Activated CD4-positive, alpha-beta T cell treated with anti-CD3 and anti-CD28 coated beads for 36 hours (primary cell): ENCODE measurements at regions of chr15 and their contacts with region 1.

Region 1: GRCh38 chr15:84600851-84601838 is at the start of gene ZSCAN2:
- DNase-seq: peak; percentile 97
- ATAC-seq: peak; percentile 96
- H3K4me3 Mint-ChIP-seq: peak within 1 kb of the TSS; percentile 82
- H3K27ac Mint-ChIP-seq: peak within 1 kb of the TSS; percentile 58
- H3K4me1 Mint-ChIP-seq: peaks cover 65% of the 10 kb centered on the region
- H3K27me3 Mint-ChIP-seq: no peaks in the 10 kb centered on the region
- total RNA-seq, gene ZSCAN2: 5.1 to 5.4 TPM

Region 2: GRCh38 chr15:84570164-84570735 is 30.9 kb before region 1 on chr15:
- CTCF ChIA-PET with region 1: interaction called, 9 read pairs
- POLR2A ChIA-PET with region 1: no interaction called
- intact Hi-C with region 1: loop called in 1 of 2 experiments (anchors 2 kb)
- DNase-seq: peak; percentile 69
- ATAC-seq: peak; percentile 43
- H3K4me3 Mint-ChIP-seq: peak overlapping the region; percentile 73
- H3K27ac Mint-ChIP-seq: peak overlapping the region; percentile 77
- H3K4me1 Mint-ChIP-seq: peaks cover 20% of the 10 kb centered on the region
- H3K27me3 Mint-ChIP-seq: peaks cover 2% of the 10 kb centered on the region

Region 3: DNA sequence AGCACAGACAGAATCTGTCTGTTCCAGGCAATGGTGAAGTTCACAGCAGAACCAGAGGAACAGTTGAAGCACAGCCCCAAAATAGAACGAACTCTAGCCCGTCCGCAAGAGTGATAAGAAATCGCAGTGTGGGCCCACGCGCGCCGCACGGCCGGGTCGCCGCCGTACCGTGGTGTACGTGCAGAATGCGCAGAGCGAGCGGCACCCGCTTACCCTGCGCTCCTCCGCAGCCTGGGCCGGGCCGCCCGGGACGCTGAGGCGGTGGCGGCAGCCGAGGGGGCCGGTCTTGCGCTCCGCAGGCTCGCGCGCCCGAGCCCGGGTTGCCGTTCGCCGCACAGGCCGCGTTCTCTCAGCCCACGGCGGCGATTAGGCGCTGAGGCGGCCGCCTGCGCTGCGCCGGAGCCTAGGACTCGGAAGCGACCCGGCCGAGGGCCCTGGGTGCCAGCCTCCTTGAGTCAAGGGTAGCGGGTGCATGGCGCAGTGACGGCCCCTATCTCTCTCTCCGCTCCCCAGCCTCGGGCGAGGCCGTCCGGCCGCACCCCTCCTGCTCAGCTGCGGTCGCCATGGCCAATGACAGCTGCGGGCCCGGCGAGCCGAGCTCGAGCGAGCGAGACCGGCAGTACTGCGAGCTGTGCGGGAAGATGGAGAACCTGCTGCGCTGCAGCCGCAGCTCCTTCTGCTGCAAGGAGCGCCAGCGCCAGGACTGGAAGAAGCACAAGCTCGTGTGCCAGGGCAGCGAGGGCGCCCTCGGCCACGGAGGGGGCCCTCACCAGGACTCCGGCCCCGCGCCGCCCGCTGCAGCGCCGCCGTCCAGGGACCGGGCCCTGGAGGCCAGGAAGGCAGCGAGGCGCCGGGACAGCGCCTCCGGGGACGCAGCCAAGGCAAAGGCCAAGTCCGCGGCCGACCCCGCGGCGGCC is 32.4 kb after region 1 on chr15:
- CTCF ChIA-PET with region 1: interaction called, 11 read pairs
- POLR2A ChIA-PET with region 1: interaction called, 5 read pairs
- intact Hi-C with region 1: loop called (anchors 1 kb)
- DNase-seq: peak; percentile 87
- ATAC-seq: peak; percentile 57
- H3K4me3 Mint-ChIP-seq: peak overlapping the region; percentile 93
- H3K27ac Mint-ChIP-seq: peak overlapping the region; percentile 99
- H3K4me1 Mint-ChIP-seq: peaks cover 45% of the 10 kb centered on the region
- H3K27me3 Mint-ChIP-seq: no peaks in the 10 kb centered on the region

Region 4: GRCh38 chr15:84748274-84749110 is 147.3 kb after region 1 on chr15 and contains the start of gene ZNF592:
- CTCF ChIA-PET with region 1: interaction called, 4 read pairs
- POLR2A ChIA-PET with region 1: no interaction called
- intact Hi-C with region 1: loop called (anchors 2 to 5 kb)
- DNase-seq: peak; percentile 86
- ATAC-seq: peak; percentile 55
- H3K4me3 Mint-ChIP-seq: peak within 1 kb of the TSS; percentile 94
- H3K27ac Mint-ChIP-seq: peak within 1 kb of the TSS; percentile 97
- H3K4me1 Mint-ChIP-seq: peaks cover 59% of the 10 kb centered on the region
- H3K27me3 Mint-ChIP-seq: no peaks in the 10 kb centered on the region
- total RNA-seq, gene ZNF592: 25.5 to 30.8 TPM

Region 5: DNA sequence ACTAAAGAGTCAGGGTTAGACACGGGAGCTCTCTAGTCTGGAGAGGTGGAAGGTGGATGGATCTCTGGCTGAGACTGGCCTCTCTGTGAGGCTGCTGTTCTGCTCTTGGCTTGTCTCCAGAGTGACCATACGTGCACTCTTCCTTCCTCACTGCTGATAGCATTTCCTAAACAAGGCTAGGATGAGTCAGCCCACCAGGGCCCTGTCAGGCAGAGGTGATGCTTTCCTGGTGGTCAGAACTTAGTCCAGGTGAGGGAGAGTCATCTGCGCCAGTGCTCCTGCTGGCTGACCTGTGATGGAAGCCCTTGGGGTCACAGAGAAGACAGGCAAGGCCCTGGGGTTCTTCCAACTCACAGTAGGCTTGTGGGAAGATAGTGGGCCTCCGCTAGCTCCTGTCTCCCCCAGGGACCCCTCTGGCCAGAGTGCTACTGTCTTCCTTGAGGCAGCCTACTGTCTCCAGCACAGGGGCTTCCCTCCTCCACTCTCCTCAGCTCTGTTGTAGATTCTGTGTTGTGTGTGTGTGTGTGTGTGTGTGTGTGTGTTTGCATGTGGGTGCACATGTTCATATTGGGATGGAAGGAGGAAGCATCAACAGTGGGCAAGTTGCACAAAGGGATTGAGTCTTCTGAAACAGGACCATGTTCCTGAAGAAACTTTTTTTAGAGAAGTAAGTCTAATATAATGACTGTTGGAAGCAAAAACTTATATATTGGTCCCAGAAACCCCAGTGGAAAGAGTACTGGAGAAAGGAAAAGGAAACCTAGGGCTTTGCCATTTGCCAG is 232.5 kb after region 1 on chr15:
- CTCF ChIA-PET with region 1: no interaction called
- POLR2A ChIA-PET with region 1: no interaction called
- intact Hi-C with region 1: loop called in 1 of 2 experiments (anchors 5 kb)
- DNase-seq: no peak
- ATAC-seq: no peak
- H3K4me3 Mint-ChIP-seq: no peak overlapping the region
- H3K27ac Mint-ChIP-seq: no peak overlapping the region
- H3K4me1 Mint-ChIP-seq: no peaks in the 10 kb centered on the region
- H3K27me3 Mint-ChIP-seq: no peaks in the 10 kb centered on the region

Region 6: DNA sequence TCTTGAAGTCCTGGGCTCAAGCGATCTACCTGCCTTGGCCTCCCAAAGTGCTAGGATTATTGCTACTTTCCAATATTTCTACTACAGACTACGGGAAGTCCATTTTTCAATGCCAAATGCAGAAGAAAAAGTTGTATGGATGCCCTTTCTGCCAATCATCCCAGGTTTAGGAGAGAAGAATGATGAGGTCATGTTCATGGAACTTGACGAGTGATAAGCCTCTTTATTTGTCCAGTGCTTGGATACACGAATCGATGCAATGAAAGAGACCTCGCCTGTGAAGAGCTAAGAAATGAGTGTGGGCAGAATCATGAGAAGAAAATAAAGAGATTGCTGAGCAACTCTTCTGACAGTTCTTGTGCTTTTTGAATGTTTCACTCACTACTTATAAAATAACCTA is 282.3 kb after region 1 on chr15:
- CTCF ChIA-PET with region 1: interaction called, 12 read pairs
- POLR2A ChIA-PET with region 1: no interaction called
- intact Hi-C with region 1: loop called in 1 of 2 experiments (anchors 1 kb)
- DNase-seq: no peak
- ATAC-seq: no peak
- H3K4me3 Mint-ChIP-seq: no peak overlapping the region
- H3K27ac Mint-ChIP-seq: no peak overlapping the region
- H3K4me1 Mint-ChIP-seq: no peaks in the 10 kb centered on the region
- H3K27me3 Mint-ChIP-seq: no peaks in the 10 kb centered on the region

Region 7: GRCh38 chr15:84981054-84981710 is 380.0 kb after region 1 on chr15:
- CTCF ChIA-PET with region 1: no interaction called
- POLR2A ChIA-PET with region 1: no interaction called
- intact Hi-C with region 1: loop called in 1 of 2 experiments (anchors 1 kb)
- DNase-seq: peak; percentile 97
- ATAC-seq: peak; percentile 80
- H3K4me3 Mint-ChIP-seq: peak overlapping the region; percentile 84
- H3K27ac Mint-ChIP-seq: peak overlapping the region; percentile 89
- H3K4me1 Mint-ChIP-seq: peaks cover 43% of the 10 kb centered on the region
- H3K27me3 Mint-ChIP-seq: no peaks in the 10 kb centered on the region